HEK293 (cell line): ENCODE measurements at regions of chr2 and their contacts with region 1.

Region 1: GRCh38 chr2:75608684-75609333 is 37.8 kb upstream of the MRPL19 start:
- H3K4me3 ChIP-seq: peak overlapping the region; percentile 20
- H3K27ac ChIP-seq: no peak overlapping the region
- H3K4me1 ChIP-seq: no peaks in the 10 kb centered on the region
- CTCF ChIP-seq: peak; percentile 79

Region 2: DNA sequence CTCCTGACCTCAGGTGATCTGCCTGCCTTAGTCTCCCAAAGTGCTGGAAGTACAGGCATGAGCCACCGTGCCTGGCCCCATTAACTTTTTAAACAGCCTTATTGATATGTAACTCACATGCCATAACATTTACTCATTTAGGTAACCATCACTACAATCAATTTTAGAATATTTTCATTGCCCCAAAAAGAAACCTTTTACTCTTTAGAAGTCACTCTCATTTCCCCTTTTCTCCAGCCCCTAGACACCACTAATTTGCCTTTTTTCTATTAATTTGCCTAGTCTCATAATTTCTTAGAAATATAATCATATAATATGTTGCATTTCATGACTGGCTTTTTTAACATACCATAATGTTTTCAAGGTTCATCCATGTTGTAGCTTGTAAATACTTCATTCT is 352.3 kb before region 1 on chr2:
- CTCF ChIA-PET with region 1: no interaction called
- POLR2A ChIA-PET with region 1: no interaction called
- H3K4me3 ChIP-seq: no peak overlapping the region
- H3K27ac ChIP-seq: no peak overlapping the region
- H3K4me1 ChIP-seq: no peaks in the 10 kb centered on the region
- CTCF ChIP-seq: no peak

Region 3: DNA sequence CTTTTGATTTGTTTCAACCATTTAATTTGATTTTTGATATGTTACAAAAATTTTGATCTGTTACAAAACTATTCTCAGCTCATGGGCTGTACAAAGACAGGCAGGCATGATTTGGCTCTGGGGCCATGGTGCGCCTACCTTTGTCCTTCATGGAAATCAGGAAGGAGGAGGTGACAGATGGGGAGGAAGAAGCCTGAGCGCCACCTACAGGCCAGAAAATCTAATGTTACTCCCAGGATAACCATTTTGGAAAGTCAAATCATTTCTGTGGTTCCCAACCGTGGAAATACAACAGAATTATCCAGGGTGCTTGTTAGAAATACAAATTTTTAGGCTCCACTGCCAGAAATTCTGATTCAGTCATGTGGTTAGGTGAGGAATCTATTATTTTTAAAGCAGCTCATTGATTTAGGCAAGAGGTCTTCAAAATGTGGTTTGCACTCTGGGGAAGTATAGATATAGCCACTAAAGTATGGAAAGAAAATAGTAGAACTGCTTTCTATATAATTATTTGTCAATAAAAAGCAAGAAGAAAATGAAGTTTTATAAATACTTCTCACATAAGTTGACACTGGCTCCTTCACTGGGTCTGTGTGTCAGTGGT is 142.0 kb before region 1 on chr2:
- CTCF ChIA-PET with region 1: interaction called, 137 read pairs
- POLR2A ChIA-PET with region 1: no interaction called
- H3K4me3 ChIP-seq: no peak overlapping the region
- H3K27ac ChIP-seq: no peak overlapping the region
- H3K4me1 ChIP-seq: no peaks in the 10 kb centered on the region
- CTCF ChIP-seq: no peak

Region 4: DNA sequence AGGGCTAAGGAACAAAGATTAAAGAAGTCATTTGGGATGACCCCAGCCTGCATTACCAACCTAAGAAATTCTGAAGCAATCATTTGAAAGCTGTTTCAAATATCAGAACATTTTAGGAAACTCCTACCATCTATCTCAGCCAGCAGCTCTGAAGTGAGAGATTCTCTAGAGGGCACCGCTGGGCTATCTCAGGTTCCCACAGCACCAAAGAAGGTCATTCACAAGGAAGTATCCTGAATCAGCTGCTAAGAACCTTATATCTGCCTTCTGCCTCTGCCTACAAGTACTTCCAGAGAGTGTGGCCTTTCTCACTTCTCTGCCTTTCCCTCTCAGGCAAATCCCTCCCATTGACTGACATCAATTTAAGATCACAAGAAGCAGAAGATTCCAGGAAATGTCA is 34.7 kb before region 1 on chr2:
- CTCF ChIA-PET with region 1: interaction called, 13 read pairs
- POLR2A ChIA-PET with region 1: no interaction called
- H3K4me3 ChIP-seq: no peak overlapping the region
- H3K27ac ChIP-seq: no peak overlapping the region
- H3K4me1 ChIP-seq: no peaks in the 10 kb centered on the region
- CTCF ChIP-seq: no peak

Region 5: DNA sequence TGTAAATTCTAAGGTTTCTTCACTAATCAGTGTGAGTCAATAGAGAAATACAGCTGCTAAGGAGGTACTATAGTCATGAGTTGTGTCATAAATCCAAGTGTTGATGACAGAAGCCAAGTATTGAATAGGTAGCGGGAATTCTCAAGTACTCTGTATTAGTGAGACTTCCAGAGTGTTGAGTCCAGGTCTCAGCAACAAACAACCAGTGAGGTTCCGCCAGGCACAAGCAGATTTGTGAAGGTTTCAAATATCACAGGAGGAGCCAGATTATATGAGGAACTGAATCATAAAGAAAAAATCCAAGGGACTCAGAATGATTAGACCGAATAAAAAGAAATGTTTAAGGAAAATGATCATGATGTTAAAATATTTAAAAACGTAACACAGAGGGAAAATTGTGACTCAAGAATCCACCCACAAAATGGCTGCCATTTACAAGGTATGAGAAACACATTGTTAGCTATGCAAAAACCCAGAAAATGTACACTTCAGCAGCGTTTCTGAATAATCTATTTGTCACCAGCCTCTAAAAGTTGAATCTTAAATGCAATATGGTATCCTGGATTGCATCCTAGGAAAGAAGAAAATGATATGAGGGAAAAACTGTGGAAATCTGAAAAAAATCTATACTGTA is 20.7 kb before region 1 on chr2:
- CTCF ChIA-PET with region 1: interaction called, 22 read pairs
- POLR2A ChIA-PET with region 1: no interaction called
- H3K4me3 ChIP-seq: no peak overlapping the region
- H3K27ac ChIP-seq: no peak overlapping the region
- H3K4me1 ChIP-seq: 0 out of 2 replicates have a peak, but pooled peaks cover 3% of the 10 kb centered on the region
- CTCF ChIP-seq: no peak

Region 6: DNA sequence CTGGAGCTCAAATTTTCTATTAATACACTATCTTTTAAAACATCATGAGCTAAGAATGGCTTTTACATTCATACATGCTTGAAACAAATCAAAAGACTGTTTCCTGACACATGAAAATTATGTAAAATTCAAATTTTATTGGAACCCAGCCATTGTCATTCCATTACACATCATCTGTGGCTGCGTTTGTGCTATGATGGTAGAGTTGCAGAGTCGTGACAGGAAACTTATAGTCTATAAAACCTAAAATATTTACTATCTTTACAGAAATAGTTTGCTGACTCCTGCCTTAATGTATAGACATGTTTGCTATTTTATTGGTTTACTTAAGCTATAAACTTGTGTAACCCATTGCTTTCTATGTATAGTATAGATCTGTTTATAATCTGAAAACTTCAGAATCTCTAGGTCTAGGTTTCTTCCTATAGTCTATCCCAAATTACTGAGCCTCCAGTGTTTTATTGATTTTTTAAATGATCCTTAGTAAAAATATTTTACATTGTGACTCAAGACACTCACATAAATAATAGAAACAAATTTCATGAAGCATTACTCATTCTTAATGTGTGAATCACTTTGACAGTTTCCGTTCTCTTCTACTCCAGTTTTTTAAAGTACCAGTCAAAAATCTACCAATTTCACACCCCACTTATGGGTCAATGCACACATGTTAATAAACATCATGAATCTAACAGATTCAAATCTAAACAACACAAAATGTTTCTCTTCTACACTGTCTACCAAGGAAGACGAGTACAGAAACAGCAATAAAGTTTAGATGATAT is 11.3 kb after region 1 on chr2:
- CTCF ChIA-PET with region 1: interaction called, 19 read pairs
- POLR2A ChIA-PET with region 1: no interaction called
- H3K4me3 ChIP-seq: no peak overlapping the region
- H3K27ac ChIP-seq: no peak overlapping the region
- H3K4me1 ChIP-seq: no peaks in the 10 kb centered on the region
- CTCF ChIP-seq: no peak

Region 7: GRCh38 chr2:75698918-75699317 is 90.1 kb after region 1 on chr2:
- CTCF ChIA-PET with region 1: no interaction called
- POLR2A ChIA-PET with region 1: no interaction called
- H3K4me3 ChIP-seq: no peak overlapping the region
- H3K27ac ChIP-seq: no peak overlapping the region
- H3K4me1 ChIP-seq: 0 out of 2 replicates have a peak, but pooled peaks cover 3% of the 10 kb centered on the region
- CTCF ChIP-seq: no peak